Left colon (tissue), 2 donors: ENCODE measurements at regions of chr18 and their contacts with region 1.

Region 1: GRCh38 chr18:63131106-63131958 is 188.2 kb downstream of the BCL2 start:
- DNase-seq: peak in 1 of 2 donors; percentile 70
- ATAC-seq: peak; percentile 59

Region 2: GRCh38 chr18:63320046-63320689 is 188.8 kb after region 1 on chr18:
- intact Hi-C with region 1: loop called (anchors 5 kb)
- DNase-seq: peak; percentile 88 to 89
- ATAC-seq: peak; percentile 67